Activated naive CD4-positive, alpha-beta T cell treated with anti-CD3 and anti-CD28 coated beads for 36 hours (primary cell): ENCODE measurements at regions of chr3 and their contacts with region 1.

Region 1: DNA sequence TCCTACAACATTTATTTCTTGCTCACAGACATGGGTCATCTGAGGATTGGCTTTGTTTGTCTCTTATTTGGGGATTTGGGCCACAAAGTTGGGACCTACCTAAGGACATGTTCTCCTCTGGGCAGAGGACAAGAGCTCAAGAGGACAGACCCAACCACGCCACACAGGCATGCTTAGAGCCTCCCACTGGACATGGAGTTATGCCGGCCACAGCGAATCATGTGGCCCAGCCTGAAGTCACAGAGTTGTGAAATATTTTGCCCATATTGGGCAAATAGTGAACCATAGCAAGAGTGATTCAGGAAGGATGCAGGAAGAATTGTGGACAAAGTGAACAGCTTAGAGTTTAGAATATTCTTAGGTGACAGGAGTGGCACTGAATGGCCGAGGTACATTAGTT is 9.9 kb downstream of the TRAK1 start:
- DNase-seq: no peak
- H3K4me3 Mint-ChIP-seq: no peak overlapping the region
- H3K27ac Mint-ChIP-seq: no peak overlapping the region
- H3K4me1 Mint-ChIP-seq: peaks cover 10% of the 10 kb centered on the region
- H3K27me3 Mint-ChIP-seq: no peaks in the 10 kb centered on the region

Region 2: DNA sequence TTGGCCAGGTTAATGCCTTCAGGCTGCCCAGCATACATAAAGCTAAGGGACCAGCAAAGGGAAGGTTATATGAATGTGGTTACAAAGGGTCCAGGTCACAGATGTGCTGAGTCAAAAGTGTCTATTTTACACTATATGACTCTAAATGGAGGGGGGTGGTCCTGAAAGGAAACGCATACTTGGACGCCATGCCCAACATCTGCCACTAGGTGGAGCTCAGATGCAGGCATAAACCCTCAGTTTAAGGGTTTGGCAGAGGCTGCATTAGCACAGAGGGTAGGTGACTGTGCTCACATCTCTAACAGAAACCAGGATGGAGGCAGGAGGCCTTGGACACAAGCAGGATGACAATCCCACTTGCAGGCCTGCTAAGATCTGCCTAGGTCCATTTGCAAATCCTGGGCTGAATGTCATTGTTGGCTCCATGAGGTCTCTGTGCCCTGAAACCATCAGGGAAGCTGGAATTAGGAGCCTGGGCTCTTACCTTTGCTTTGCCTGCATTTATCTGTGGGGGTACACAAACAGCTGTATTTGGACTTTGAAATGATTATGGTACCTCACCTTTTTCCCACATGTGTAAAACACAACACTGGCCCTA is 1520.5 kb before region 1 on chr3:
- CTCF ChIA-PET with region 1: interaction called, 3 read pairs
- intact Hi-C with region 1: loop called (anchors 2 kb)
- DNase-seq: peak; percentile 79
- H3K4me3 Mint-ChIP-seq: no peak overlapping the region
- H3K27ac Mint-ChIP-seq: no peak overlapping the region
- H3K4me1 Mint-ChIP-seq: no peaks in the 10 kb centered on the region
- H3K27me3 Mint-ChIP-seq: peaks cover 2% of the 10 kb centered on the region

Region 3: GRCh38 chr3:41893977-41894376 is 207.1 kb before region 1 on chr3:
- CTCF ChIA-PET with region 1: interaction called, 25 read pairs
- intact Hi-C with region 1: loop called (anchors 1 kb)
- DNase-seq: peak; percentile 23
- H3K4me3 Mint-ChIP-seq: no peak overlapping the region
- H3K27ac Mint-ChIP-seq: no peak overlapping the region
- H3K4me1 Mint-ChIP-seq: no peaks in the 10 kb centered on the region
- H3K27me3 Mint-ChIP-seq: no peaks in the 10 kb centered on the region

Region 4: GRCh38 chr3:41900265-41900664 is 200.8 kb before region 1 on chr3:
- CTCF ChIA-PET with region 1: interaction called, 25 read pairs
- intact Hi-C with region 1: no loop called
- DNase-seq: no peak
- H3K4me3 Mint-ChIP-seq: no peak overlapping the region
- H3K27ac Mint-ChIP-seq: no peak overlapping the region
- H3K4me1 Mint-ChIP-seq: no peaks in the 10 kb centered on the region
- H3K27me3 Mint-ChIP-seq: no peaks in the 10 kb centered on the region

Region 5: GRCh38 chr3:41997702-41998550 is 103.1 kb before region 1 on chr3:
- CTCF ChIA-PET with region 1: interaction called, 11 read pairs
- intact Hi-C with region 1: no loop called
- DNase-seq: no peak
- H3K4me3 Mint-ChIP-seq: no peak overlapping the region
- H3K27ac Mint-ChIP-seq: no peak overlapping the region
- H3K4me1 Mint-ChIP-seq: no peaks in the 10 kb centered on the region
- H3K27me3 Mint-ChIP-seq: peaks cover 4% of the 10 kb centered on the region

Region 6: GRCh38 chr3:42080452-42080891 is 20.6 kb before region 1 on chr3:
- CTCF ChIA-PET with region 1: interaction called, 13 read pairs
- intact Hi-C with region 1: no loop called
- DNase-seq: peak; percentile 40
- H3K4me3 Mint-ChIP-seq: no peak overlapping the region
- H3K27ac Mint-ChIP-seq: peak overlapping the region; percentile 41
- H3K4me1 Mint-ChIP-seq: peaks cover 44% of the 10 kb centered on the region
- H3K27me3 Mint-ChIP-seq: no peaks in the 10 kb centered on the region